Panc1 (cell line): ENCODE measurements at regions of chr2 and their contacts with region 1.

Region 1: GRCh38 chr2:74919827-74920226 is 38.6 kb upstream of the POLE4 start:
- DNase-seq: peak; percentile 38
- ATAC-seq: peak; percentile 83
- H3K4me3 ChIP-seq: peak overlapping the region; percentile 38 to 70
- H3K27ac ChIP-seq: no peak overlapping the region
- H3K4me1 ChIP-seq: no peaks in the 10 kb centered on the region
- H3K27me3 ChIP-seq: no peaks in the 10 kb centered on the region
- CTCF ChIP-seq: peak; percentile 94

Region 2: DNA sequence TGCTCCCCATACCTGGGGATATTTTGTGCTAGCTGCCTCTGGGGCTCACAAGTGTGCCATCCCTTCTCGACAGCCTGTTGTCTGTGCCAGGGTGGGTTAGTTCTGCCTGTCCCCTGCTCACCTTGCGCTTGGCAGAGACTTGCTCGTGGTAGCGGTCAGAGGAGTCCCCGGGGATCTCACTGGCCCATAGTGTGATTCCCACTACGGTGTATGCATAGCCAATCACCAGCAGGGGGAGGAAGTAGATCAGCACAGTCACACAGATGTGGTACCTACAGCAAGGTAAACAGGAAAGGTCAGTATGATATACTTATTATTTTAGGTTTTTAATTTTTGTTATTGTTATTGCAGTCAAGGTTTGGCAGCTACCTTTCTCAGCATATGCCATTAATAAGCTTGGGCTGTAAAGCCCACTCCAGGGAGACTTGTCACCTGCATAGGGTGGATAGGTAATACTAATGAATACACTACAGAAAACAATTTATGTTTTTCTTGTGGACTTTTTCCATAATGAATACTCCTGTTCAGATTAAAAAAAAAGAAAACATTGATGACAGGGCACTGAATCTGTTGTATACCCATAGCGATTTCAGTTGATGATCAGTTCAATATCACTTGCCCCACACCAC is 133.8 kb after region 1 on chr2:
- CTCF ChIA-PET with region 1: interaction called, 5 read pairs
- POLR2A ChIA-PET with region 1: no interaction called
- in situ Hi-C with region 1: no loop called
- intact Hi-C with region 1: loop called (anchors 10 kb)
- DNase-seq: no peak
- ATAC-seq: peak; percentile 98
- H3K4me3 ChIP-seq: no peak overlapping the region
- H3K27ac ChIP-seq: no peak overlapping the region
- H3K4me1 ChIP-seq: no peaks in the 10 kb centered on the region
- H3K27me3 ChIP-seq: no peaks in the 10 kb centered on the region
- CTCF ChIP-seq: peak; percentile 81

Region 3: GRCh38 chr2:75241696-75242095 is 321.9 kb after region 1 on chr2:
- CTCF ChIA-PET with region 1: no interaction called
- POLR2A ChIA-PET with region 1: no interaction called
- in situ Hi-C with region 1: no loop called
- intact Hi-C with region 1: loop called (anchors 5 kb)
- DNase-seq: no peak
- ATAC-seq: no peak
- H3K4me3 ChIP-seq: no peak overlapping the region
- H3K27ac ChIP-seq: no peak overlapping the region
- H3K4me1 ChIP-seq: no peaks in the 10 kb centered on the region
- H3K27me3 ChIP-seq: no peaks in the 10 kb centered on the region; the same call in 1 of the 2 replicates
- CTCF ChIP-seq: peak; percentile 68

Region 4: DNA sequence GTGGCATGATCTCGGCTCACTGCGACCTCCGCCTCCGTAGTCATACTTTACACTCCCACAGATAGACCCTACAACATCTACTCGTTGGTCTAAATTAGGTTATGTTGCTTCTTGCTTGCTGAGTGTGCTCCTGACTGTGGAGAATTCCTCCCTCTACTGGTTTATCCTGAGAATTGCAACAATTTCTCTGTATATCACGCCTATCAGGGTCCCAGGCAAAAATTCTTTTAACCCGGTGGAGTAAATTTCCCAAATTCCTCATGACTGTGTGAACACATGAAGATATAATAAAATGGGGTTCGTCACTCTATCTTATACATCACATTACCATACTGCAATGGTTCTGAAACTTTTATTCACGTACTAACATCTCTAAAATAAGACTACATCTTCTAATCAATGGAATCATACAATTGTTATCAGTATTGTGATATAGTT is 484.2 kb after region 1 on chr2:
- CTCF ChIA-PET with region 1: no interaction called
- POLR2A ChIA-PET with region 1: no interaction called
- in situ Hi-C with region 1: no loop called
- intact Hi-C with region 1: loop called (anchors 2 kb)
- DNase-seq: peak; percentile 32
- ATAC-seq: peak; percentile 90
- H3K4me3 ChIP-seq: no peak overlapping the region
- H3K27ac ChIP-seq: no peak overlapping the region
- H3K4me1 ChIP-seq: no peaks in the 10 kb centered on the region
- H3K27me3 ChIP-seq: no peaks in the 10 kb centered on the region
- CTCF ChIP-seq: peak; percentile 82